GM12878 (cell line): ENCODE measurements at regions of chr11 and their contacts with region 1.

Region 1: DNA sequence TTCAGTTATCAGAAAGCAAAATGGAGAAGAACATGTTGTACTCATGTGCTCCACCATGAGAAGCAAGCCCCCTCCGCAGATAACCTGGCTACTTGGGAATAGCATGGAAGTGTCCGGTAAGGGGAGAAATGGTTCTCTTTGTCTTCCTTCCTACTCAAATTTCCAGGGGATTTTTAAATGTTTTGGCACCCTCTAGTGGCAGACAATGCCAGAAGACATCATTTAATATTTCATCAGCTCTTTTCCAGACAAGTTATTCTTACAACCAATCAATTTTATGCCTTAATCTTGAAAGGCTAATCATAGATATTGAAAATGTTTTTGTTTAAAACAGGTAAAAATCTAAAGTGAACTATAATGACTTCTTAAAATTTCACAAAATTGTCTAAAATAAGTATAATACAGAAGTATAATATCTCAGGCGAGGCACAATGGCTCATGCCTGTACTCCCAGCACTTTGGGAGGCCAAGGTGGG is 15.7 kb downstream of the CRTAM start:
- DNase-seq: no peak
- ATAC-seq: no peak
- H3K4me3 ChIP-seq: no peak overlapping the region
- H3K27ac ChIP-seq: no peak overlapping the region
- H3K4me1 ChIP-seq: peaks cover 24% of the 10 kb centered on the region
- H3K27me3 ChIP-seq: no peaks in the 10 kb centered on the region
- CTCF ChIP-seq: peak; percentile 53 to 78 (median 73)
- EP300 ChIP-seq: no peak
- POLR2A ChIP-seq: no peak
- RAD21 ChIP-seq: peak; percentile 87

Region 2: DNA sequence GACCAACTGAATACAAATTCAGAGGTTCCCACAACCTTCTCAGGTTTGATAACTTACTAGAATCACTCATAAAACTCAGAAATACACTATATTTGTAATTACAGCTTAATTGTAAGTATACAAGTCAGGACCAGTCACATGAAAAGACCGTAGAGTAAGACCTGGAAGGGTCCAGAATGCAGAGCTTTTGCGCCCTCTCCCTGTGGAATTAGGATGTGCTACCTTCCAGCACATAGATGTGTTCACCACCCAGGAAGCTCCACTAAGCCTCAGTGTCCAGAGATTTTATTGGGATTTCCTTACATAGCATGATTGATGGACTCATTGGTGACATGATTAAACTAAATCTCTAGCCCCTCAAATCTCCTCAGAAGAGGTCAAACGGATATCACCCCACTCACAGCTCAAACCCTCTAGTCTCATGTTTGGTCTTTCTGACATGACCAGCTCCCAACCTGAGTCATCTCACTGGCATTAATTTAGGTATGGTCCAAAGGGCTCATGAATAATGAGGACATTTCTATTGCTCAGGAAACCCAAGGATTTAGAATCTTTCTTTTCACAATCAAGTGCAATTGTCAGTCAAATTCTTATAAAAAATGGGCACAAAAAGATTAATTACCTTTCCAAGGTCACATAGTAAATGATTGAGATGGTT is 275.7 kb before region 1 on chr11:
- CTCF ChIA-PET with region 1: interaction called, 45 read pairs
- POLR2A ChIA-PET with region 1: no interaction called
- RAD21 ChIA-PET with region 1: interaction called, 16 read pairs
- SMC1A ChIA-PET with region 1: interaction called, 10 read pairs
- in situ Hi-C with region 1: no loop called
- intact Hi-C with region 1: loop called (anchors 2 kb)
- DNase-seq: no peak
- ATAC-seq: no peak
- H3K4me3 ChIP-seq: no peak overlapping the region
- H3K27ac ChIP-seq: no peak overlapping the region
- H3K4me1 ChIP-seq: no peaks in the 10 kb centered on the region
- H3K27me3 ChIP-seq: no peaks in the 10 kb centered on the region
- CTCF ChIP-seq: peak in 1 of 3 experiments; percentile 16; a peak in 1 of 6 replicates
- EP300 ChIP-seq: no peak
- POLR2A ChIP-seq: no peak
- RAD21 ChIP-seq: no peak

Region 3: DNA sequence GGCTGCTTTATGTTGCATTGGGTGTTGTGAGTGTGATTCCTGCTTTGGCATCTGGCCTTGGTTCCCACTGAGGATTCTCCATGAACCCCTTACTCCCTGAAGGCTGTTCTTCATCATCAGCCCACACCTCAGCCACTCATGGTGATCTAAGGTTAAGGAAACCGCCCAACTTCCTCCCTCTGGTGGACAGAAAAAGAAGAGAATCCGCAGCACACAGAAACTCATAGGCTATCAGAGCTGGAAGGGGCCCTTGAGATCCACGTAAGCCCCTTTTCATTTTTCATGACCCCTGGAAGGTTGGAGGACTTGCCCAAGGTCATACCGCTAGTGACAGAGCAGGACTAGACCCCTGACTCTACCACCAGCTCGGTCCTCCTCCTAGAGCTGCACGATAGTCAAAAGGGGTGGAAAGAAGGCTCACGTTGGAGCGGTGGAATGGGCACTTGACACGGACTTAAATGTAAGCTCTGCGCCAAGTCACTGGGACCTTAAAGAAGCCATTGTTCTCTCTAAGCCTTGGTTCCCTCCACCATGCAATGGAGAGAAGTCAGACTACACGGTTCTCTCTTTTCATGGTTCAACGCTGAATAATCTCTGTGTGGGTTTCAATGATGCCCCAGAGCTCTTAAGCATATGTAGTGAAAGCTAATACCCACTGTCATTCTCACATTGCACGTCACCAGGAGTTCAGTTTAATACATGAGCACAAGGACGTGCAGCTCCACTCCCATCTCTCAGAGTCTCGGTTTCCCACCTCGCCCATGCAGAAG is 99.3 kb before region 1 on chr11:
- CTCF ChIA-PET with region 1: interaction called, 30 read pairs
- POLR2A ChIA-PET with region 1: no interaction called
- RAD21 ChIA-PET with region 1: interaction called, 3 read pairs
- SMC1A ChIA-PET with region 1: interaction called, 6 read pairs
- in situ Hi-C with region 1: no loop called
- intact Hi-C with region 1: no loop called
- DNase-seq: no peak
- ATAC-seq: peak; percentile 87
- H3K4me3 ChIP-seq: no peak overlapping the region
- H3K27ac ChIP-seq: no peak overlapping the region
- H3K4me1 ChIP-seq: 0 out of 2 replicates have a peak, but pooled peaks cover 3% of the 10 kb centered on the region
- H3K27me3 ChIP-seq: no peaks in the 10 kb centered on the region; a peak in 2 of 4 replicates
- CTCF ChIP-seq: peak; percentile 47 to 66 (median 58); a peak in 5 of 6 replicates
- EP300 ChIP-seq: no peak
- POLR2A ChIP-seq: no peak
- RAD21 ChIP-seq: peak; percentile 74

Region 4: DNA sequence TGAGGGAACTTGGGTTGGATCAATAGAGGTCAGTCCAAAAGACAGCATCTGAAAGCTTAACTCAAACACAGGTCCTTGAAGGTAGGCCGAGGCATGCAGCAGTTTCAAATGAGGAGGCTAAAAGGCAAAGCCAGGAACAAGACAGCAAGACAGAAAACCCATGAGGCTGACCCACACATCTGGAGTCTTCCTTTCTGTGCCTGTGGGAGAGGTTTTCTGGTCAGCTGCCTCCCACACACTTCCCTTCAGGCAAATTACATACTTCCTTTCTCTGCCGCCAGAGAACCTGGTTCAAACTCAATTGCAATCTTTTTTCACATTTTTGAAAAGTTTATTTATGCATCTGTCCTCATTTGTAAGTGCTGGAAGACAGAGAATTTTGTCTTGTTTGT is 45.5 kb before region 1 on chr11:
- CTCF ChIA-PET with region 1: interaction called, 484 read pairs
- POLR2A ChIA-PET with region 1: interaction called, 34 read pairs
- RAD21 ChIA-PET with region 1: interaction called, 293 read pairs
- SMC1A ChIA-PET with region 1: interaction called, 485 read pairs
- in situ Hi-C with region 1: no loop called
- intact Hi-C with region 1: no loop called
- DNase-seq: peak; percentile 66
- ATAC-seq: peak; percentile 81
- H3K4me3 ChIP-seq: no peak overlapping the region
- H3K27ac ChIP-seq: peak overlapping the region; percentile 47; the same call in 1 of the 2 replicates
- H3K4me1 ChIP-seq: peaks cover 18% of the 10 kb centered on the region
- H3K27me3 ChIP-seq: no peaks in the 10 kb centered on the region
- CTCF ChIP-seq: no peak
- EP300 ChIP-seq: no peak
- POLR2A ChIP-seq: no peak
- RAD21 ChIP-seq: no peak

Region 5: GRCh38 chr11:122843281-122844141 is 10.5 kb before region 1 on chr11:
- CTCF ChIA-PET with region 1: interaction called, 49 read pairs
- POLR2A ChIA-PET with region 1: interaction called, 10 read pairs
- RAD21 ChIA-PET with region 1: interaction called, 45 read pairs
- SMC1A ChIA-PET with region 1: interaction called, 57 read pairs
- in situ Hi-C with region 1: no loop called
- intact Hi-C with region 1: no loop called
- DNase-seq: no peak
- ATAC-seq: peak; percentile 87
- H3K4me3 ChIP-seq: no peak overlapping the region
- H3K27ac ChIP-seq: peak overlapping the region; percentile 42; the same call in 1 of the 2 replicates
- H3K4me1 ChIP-seq: peaks cover 11% of the 10 kb centered on the region; the same call in 1 of the 2 replicates
- H3K27me3 ChIP-seq: no peaks in the 10 kb centered on the region
- CTCF ChIP-seq: no peak
- EP300 ChIP-seq: no peak
- POLR2A ChIP-seq: no peak
- RAD21 ChIP-seq: no peak

Region 6: GRCh38 chr11:122882857-122883645 is 29.0 kb after region 1 on chr11:
- CTCF ChIA-PET with region 1: interaction called, 275 read pairs
- POLR2A ChIA-PET with region 1: interaction called, 7 read pairs
- RAD21 ChIA-PET with region 1: interaction called, 26 read pairs
- SMC1A ChIA-PET with region 1: interaction called, 466 read pairs
- in situ Hi-C with region 1: no loop called
- intact Hi-C with region 1: no loop called
- DNase-seq: no peak
- ATAC-seq: peak; percentile 67
- H3K4me3 ChIP-seq: peak overlapping the region; percentile 76
- H3K27ac ChIP-seq: peak overlapping the region; percentile 71
- H3K4me1 ChIP-seq: no peaks in the 10 kb centered on the region; the same call in 1 of the 2 replicates
- H3K27me3 ChIP-seq: no peaks in the 10 kb centered on the region
- CTCF ChIP-seq: no peak
- EP300 ChIP-seq: 0 out of 4 replicates have a peak, but pooled peaks of 1 of the 2 experiments have one; percentile 17
- POLR2A ChIP-seq: peak; percentile 53; the same call in 1 of the 2 replicates
- RAD21 ChIP-seq: no peak